Left ventricle myocardium inferior (tissue), 1 donor: ENCODE measurements at regions of chr6 and their contacts with region 1.

Region 1: DNA sequence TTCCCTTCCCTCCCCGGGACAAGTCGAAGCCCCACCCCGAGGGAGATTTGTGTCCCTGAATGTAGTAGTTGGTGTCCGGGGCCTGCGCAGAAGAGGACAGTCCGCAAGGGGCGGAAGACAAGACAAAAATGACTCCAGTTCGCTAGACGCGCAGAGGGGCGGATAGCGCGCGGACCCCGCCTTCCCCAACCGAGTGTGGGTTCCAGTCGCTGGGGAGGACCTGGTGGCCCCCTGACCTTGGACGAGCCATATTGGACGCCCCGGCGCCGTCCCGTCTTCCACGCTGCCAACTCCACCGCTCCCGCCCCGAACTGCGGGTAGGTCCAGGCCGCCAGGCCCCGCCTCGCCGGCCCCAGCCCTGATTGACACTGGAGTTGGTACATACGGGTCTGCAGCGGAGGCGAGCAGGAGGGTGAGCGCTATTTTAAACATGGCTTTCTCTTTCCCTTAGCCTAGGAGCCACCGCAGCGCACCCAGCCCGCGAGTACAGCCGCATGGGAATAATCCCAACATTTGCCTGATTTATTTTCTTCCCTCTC is 802 bp downstream of the HMGN3 start:
- DNase-seq: peak; percentile 90
- H3K4me3 ChIP-seq: peak overlapping the region; percentile 88
- H3K27ac ChIP-seq: peak overlapping the region; percentile 98
- H3K4me1 ChIP-seq: peaks cover 45% of the 10 kb centered on the region
- H3K27me3 ChIP-seq: no peaks in the 10 kb centered on the region
- CTCF ChIP-seq: peak; percentile 66

Region 2: GRCh38 chr6:79078075-79079025 is 155.3 kb before region 1 on chr6 and contains the start of gene PHIP:
- intact Hi-C with region 1: loop called (anchors 5 kb)
- DNase-seq: peak; percentile 95
- H3K4me3 ChIP-seq: peak within 1 kb of the TSS; percentile 92
- H3K27ac ChIP-seq: peak within 1 kb of the TSS; percentile 99
- H3K4me1 ChIP-seq: peaks cover 46% of the 10 kb centered on the region
- H3K27me3 ChIP-seq: no peaks in the 10 kb centered on the region
- CTCF ChIP-seq: no peak
- total RNA-seq, gene PHIP: 13.0 TPM

Region 3: GRCh38 chr6:79570129-79571029 is 336.7 kb after region 1 on chr6:
- intact Hi-C with region 1: no loop called
- DNase-seq: no peak
- H3K4me3 ChIP-seq: peak overlapping the region; percentile 52
- H3K27ac ChIP-seq: no peak overlapping the region
- H3K4me1 ChIP-seq: peaks cover 12% of the 10 kb centered on the region
- H3K27me3 ChIP-seq: no peaks in the 10 kb centered on the region
- CTCF ChIP-seq: peak; percentile 78

Region 4: DNA sequence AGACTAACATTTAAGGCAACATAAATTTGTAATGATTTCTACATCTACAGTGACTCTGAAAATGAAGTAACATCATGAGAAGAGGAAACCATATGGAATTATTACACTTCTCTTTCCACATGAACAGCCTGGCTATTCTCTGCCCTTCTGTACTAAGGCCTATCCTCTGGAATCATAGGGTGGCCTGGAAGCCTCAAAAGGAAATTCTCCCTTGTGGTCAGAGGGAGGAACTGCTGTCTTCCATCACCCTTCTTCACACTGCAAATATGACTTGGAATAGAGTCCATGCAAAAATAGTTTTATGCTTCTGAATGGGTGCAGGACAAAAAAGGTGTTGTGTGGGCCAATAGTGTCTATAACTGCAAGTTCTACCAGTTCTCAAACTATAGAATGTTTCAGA is 352.9 kb after region 1 on chr6:
- intact Hi-C with region 1: no loop called
- DNase-seq: no peak
- H3K4me3 ChIP-seq: no peak overlapping the region
- H3K27ac ChIP-seq: no peak overlapping the region
- H3K4me1 ChIP-seq: no peaks in the 10 kb centered on the region
- H3K27me3 ChIP-seq: no peaks in the 10 kb centered on the region
- CTCF ChIP-seq: peak; percentile 43

Region 5: GRCh38 chr6:79861023-79861422 is 627.3 kb after region 1 on chr6:
- intact Hi-C with region 1: no loop called
- DNase-seq: no peak
- H3K4me3 ChIP-seq: no peak overlapping the region
- H3K27ac ChIP-seq: no peak overlapping the region
- H3K4me1 ChIP-seq: no peaks in the 10 kb centered on the region
- H3K27me3 ChIP-seq: no peaks in the 10 kb centered on the region
- CTCF ChIP-seq: no peak